ENCODE measurements at regions of chr14 and their contacts with region 1.

Region 1: GRCh38 chr14:87896393-87897380 is 96.3 kb downstream of the GALC start:
- DNase-seq: no peak
- ATAC-seq: peak; percentile 48 to 65

Region 2: DNA sequence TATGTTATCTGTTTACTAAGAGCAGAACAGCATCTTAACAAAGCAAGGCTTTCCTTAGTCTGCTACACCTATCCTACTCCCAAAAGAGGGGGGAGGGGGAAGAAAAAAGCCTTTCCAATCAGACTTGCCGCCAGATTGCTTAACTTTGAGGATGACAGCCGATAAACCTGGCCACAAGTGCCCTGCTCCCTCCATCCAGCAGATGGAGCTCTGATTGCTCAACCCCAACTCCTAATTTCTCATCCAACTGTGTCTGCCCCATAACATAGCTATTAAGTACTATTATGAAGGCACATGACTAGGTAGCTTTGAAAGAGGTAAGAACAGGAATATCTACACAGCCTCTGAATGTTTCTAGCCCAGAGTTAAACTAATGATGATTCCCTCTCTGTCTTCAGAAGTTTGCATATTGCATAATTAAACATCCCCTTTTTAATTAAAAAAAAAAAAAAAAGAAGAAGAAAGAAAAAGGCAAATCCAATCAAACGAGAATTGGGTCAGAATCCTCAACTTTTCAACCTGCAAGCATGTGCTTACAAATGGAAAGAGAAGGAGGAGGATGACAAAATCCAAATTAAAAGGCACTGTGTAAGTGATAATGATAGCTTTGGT is 151.1 kb before region 1 on chr14:
- intact Hi-C with region 1: loop called (anchors 5 kb)
- DNase-seq: no peak
- ATAC-seq: peak in 1 of 2 donors; percentile 38

Region 3: DNA sequence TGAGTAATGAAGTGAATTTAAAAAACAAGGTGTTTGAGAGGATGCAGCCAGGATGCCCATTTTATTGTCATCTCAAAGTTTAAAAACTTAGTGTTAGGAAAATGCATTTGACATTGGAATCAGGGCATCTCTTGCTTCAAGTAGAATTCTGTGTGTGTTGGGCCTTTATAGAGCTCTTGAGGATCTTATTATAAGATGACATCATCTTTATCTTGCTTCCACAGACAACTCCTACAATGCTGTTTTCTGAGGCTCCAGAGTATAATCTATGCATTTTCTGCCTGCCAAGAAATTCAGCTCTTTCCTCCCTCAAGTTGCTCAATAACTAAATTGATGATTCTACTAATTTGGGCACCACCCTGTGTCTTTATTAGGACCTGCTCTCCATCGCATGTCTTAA is 93.8 kb before region 1 on chr14:
- intact Hi-C with region 1: loop called in 1 of 2 experiments (anchors 5 kb)
- DNase-seq: no peak
- ATAC-seq: no peak

Region 4: DNA sequence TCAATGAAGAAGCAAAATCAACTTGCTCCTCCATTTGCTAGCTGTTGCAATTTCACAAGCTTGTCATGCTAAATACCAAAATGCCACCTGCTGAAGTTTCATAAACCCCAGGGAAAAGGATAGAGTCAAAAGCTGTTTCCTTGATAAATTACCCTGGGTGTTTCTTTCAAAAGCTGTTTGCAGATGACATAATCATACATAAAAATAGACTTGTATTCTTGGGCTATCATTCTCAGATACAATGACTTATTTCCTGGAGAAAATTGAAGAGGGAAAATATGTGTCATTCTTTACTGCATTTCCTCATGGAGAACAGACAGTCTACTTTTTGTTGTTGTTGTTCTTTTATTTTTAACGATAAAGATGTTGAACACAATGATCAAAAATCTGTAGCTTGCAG is 22.9 kb before region 1 on chr14:
- intact Hi-C with region 1: no loop called
- DNase-seq: no peak
- ATAC-seq: no peak

Region 5: GRCh38 chr14:88706425-88706824 is 809.7 kb after region 1 on chr14:
- intact Hi-C with region 1: no loop called
- DNase-seq: no peak
- ATAC-seq: no peak